Astrocyte of the cerebellum (primary cell): ENCODE measurements at regions of chr4 and their contacts with region 1.

Region 1: GRCh38 chr4:87147116-87147515 is 73.3 kb downstream of the KLHL8 start:
- DNase-seq: no peak
- H3K4me3 ChIP-seq: no peak overlapping the region
- CTCF ChIP-seq: no peak

Region 2: GRCh38 chr4:87235020-87235671 is 88.0 kb after region 1 on chr4:
- in situ Hi-C with region 1: loop called (anchors 5 kb)
- DNase-seq: no peak
- H3K4me3 ChIP-seq: peak overlapping the region; percentile 39
- CTCF ChIP-seq: no peak